Psoas muscle (tissue), 8 donors: ENCODE measurements at regions of chr14 and their contacts with region 1.

Region 1: GRCh38 chr14:39005044-39005880 is 97.8 kb downstream of the SEC23A start:
- DNase-seq: no peak
- ATAC-seq: no peak
- H3K4me3 ChIP-seq: no peak overlapping the region
- H3K27ac ChIP-seq: no peak overlapping the region
- H3K4me1 ChIP-seq: no peaks in the 10 kb centered on the region
- H3K27me3 ChIP-seq: no peaks in the 10 kb centered on the region
- CTCF ChIP-seq: no peak

Region 2: GRCh38 chr14:37678916-37679315 is 1326.3 kb before region 1 on chr14:
- intact Hi-C with region 1: no loop called
- DNase-seq: no peak
- ATAC-seq: no peak
- H3K4me3 ChIP-seq: no peak overlapping the region
- H3K27ac ChIP-seq: no peak overlapping the region
- H3K4me1 ChIP-seq: no peaks in the 10 kb centered on the region
- H3K27me3 ChIP-seq: no peaks in the 10 kb centered on the region
- CTCF ChIP-seq: no peak

Region 3: GRCh38 chr14:38762426-38762825 is 242.8 kb before region 1 on chr14:
- intact Hi-C with region 1: no loop called
- DNase-seq: no peak
- ATAC-seq: no peak
- H3K4me3 ChIP-seq: no peak overlapping the region
- H3K27ac ChIP-seq: no peak overlapping the region
- H3K4me1 ChIP-seq: no peaks in the 10 kb centered on the region
- H3K27me3 ChIP-seq: no peaks in the 10 kb centered on the region
- CTCF ChIP-seq: no peak

Region 4: GRCh38 chr14:38873941-38874612 is 131.2 kb before region 1 on chr14:
- intact Hi-C with region 1: loop called in 1 of 2 experiments (anchors 10 kb)
- DNase-seq: no peak
- ATAC-seq: no peak
- H3K4me3 ChIP-seq: no peak overlapping the region
- H3K27ac ChIP-seq: no peak overlapping the region
- H3K4me1 ChIP-seq: no peaks in the 10 kb centered on the region
- H3K27me3 ChIP-seq: peaks cover 0 to 3% (median 0%) of the 10 kb centered on the region in 3 donors
- CTCF ChIP-seq: no peak

Region 5: DNA sequence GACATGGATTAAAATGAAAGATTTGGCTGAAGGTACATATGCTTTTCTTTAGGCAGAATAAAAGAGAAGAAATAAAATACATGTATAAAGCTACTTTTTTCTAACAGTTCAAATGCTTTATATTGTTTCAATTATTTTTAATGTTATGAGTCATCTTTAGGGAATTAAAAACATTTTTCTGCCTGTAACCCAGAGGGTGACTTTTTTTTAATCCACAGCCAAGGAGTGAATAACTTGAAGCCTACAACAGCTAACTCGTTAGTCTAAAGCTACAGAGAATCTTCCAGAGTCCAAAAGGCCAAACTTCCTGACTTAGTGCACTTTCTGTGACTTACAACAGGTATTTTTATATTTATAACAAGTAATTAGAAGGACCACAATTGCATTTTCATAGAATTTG is 53.8 kb before region 1 on chr14:
- intact Hi-C with region 1: no loop called
- DNase-seq: no peak
- ATAC-seq: no peak
- H3K4me3 ChIP-seq: no peak overlapping the region
- H3K27ac ChIP-seq: no peak overlapping the region
- H3K4me1 ChIP-seq: no peaks in the 10 kb centered on the region
- H3K27me3 ChIP-seq: no peaks in the 10 kb centered on the region
- CTCF ChIP-seq: no peak